Thyroid gland (tissue), 4 donors: ENCODE measurements at regions of chr3 and their contacts with region 1.

Region 1: GRCh38 chr3:52144034-52144795 is 10.0 kb downstream of the POC1A start:
- DNase-seq: peak; percentile 87 to 91
- H3K4me3 ChIP-seq: no peak overlapping the region
- H3K27ac ChIP-seq: no peak overlapping the region
- H3K4me1 ChIP-seq: no peaks in the 10 kb centered on the region
- H3K27me3 ChIP-seq: no peaks in the 10 kb centered on the region
- CTCF ChIP-seq: peak; percentile 87 to 99 (median 96)
- POLR2A ChIP-seq: no peak

Region 2: GRCh38 chr3:52190294-52191074 is 46.3 kb after region 1 on chr3:
- intact Hi-C with region 1: loop called (anchors 5 kb)
- DNase-seq: peak; percentile 68 to 77
- H3K4me3 ChIP-seq: no peak overlapping the region
- H3K27ac ChIP-seq: peak overlapping the region; percentile 2 to 61 (median 53)
- H3K4me1 ChIP-seq: peaks cover 20 to 31% of the 10 kb centered on the region in 2 donors
- H3K27me3 ChIP-seq: no peaks in the 10 kb centered on the region
- CTCF ChIP-seq: no peak
- POLR2A ChIP-seq: no peak